ENCODE measurements at regions of chr20 and their contacts with region 1.

Region 1: DNA sequence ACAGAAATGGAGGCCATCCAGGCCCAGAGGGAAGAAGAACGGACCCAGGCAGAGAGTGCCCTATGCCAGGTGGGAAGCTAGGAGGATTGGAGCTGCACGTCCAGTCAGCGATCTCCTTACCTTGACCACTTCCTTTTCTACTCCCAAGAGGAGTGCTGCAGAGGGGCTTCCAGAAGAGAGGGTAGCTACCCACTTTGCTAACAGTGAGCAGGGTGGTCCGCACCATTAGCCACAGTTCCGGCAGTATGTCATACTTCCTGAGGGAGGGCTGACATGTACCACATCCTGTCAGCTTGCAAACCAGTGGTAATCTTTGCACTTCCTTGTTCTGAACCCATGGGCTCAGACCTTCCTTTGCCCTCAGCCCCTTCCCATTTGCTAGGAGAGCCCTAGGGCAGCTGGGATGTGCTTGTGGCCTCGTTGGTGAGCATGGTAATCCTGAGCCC is 35.4 kb downstream of the CEP250 start:
- DNase-seq: peak; percentile 24 to 84 (median 64)
- ATAC-seq: peak; percentile 99 to 100
- H3K4me3 Mint-ChIP-seq: peak overlapping the region; percentile 96 to 100 (median 99)
- H3K27ac Mint-ChIP-seq: peak overlapping the region; percentile 97 to 100 (median 99)
- H3K4me1 Mint-ChIP-seq: peaks cover 31 to 81% (median 75%) of the 10 kb centered on the region in 4 donors
- H3K27me3 Mint-ChIP-seq: no peaks in the 10 kb centered on the region

Region 2: GRCh38 chr20:35432430-35432735 is 58.4 kb before region 1 on chr20:
- POLR2A ChIA-PET with region 1: no interaction called
- DNase-seq: no peak
- ATAC-seq: no peak
- H3K4me3 Mint-ChIP-seq: no peak overlapping the region
- H3K27ac Mint-ChIP-seq: peak overlapping the region in 3 of 10 donors; percentile 9 to 63 (median 30)
- H3K4me1 Mint-ChIP-seq: peaks cover 0 to 3% (median 0%) of the 10 kb centered on the region in 4 donors
- H3K27me3 Mint-ChIP-seq: no peaks in the 10 kb centered on the region

Region 3: DNA sequence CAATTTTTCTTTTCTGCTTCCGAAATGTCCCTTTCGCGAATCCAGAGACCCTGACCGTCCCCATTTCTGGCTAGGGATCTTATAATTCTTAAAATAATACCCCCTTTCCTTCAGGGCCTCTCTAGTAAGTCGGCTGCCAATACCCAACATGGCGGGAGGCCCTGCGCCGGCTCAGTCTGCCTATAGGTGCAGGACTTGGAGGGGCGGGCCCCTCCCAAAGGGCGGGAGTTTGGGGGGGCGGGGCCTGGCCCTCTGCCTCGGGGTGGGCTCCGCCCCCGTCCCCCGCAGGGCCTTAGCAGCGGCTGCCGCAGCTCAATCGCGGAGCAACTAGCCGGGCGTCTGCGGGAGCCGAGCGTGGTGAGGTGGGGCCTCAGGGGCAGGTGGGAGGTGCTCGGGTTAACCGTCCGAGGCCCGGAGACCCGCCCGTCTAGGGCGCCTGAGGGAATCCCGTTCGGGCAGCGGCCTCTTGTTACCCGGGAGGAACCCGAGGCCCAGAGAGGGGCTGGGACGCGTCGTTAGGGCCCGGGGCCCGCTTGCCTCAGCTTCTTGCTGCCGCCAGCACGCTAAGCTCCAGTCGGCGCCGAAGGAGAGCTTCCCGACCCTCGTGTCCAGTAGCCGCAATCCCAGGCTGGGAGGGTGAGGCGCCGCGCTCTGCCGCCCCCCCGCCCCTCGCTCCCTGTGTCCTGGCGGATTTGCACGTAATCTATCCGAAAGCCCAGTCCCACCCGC is 35.7 kb before region 1 on chr20 and contains the start of gene CEP250:
- POLR2A ChIA-PET with region 1: interaction called, 18 read pairs
- DNase-seq: peak; percentile 91 to 98 (median 96)
- ATAC-seq: peak; percentile 93 to 94
- H3K4me3 Mint-ChIP-seq: peak within 1 kb of the TSS; percentile 88 to 98 (median 95)
- H3K27ac Mint-ChIP-seq: peak within 1 kb of the TSS; percentile 87 to 100 (median 98)
- H3K4me1 Mint-ChIP-seq: peaks cover 0 to 33% (median 21%) of the 10 kb centered on the region in 4 donors
- H3K27me3 Mint-ChIP-seq: no peaks in the 10 kb centered on the region
- polyA plus RNA-seq, gene CEP250: 4.5 to 17.5 (median 6.0) TPM

Region 4: DNA sequence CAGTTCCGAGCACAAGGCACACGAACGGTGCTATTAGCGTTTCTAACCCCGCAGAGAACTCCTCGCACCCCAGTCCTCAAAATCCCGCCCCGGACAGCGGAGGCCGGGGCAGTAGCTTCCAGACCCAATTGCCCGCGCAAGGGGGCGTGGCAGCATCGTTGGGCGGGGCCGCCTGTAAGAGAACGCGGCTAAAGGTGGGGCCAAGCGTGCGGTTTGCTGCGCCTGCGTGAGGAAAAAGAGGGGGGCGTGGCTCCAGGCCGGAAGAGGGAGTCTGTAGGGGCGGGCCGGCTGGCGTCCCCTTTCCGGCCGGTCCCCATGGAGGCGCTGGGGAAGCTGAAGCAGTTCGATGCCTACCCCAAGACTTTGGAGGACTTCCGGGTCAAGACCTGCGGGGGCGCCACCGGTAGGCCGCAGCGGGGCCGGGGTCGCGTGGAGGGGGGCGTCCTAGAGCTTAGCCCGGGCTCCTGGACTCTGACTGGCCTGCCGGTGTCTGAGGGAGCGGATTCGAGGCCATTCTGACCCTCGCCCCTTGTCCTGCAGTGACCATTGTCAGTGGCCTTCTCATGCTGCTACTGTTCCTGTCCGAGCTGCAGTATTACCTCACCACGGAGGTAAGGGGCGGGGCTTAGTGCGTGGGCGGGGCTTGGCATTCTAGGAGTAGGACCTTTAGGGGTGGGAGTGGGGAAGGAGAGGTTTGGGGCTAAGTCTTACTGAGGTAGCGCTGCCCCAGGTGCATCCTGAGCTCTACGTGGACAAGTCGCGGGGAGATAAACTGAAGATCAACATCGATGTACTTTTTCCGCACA is 51.2 kb after region 1 on chr20 and contains the start of gene ERGIC3:
- POLR2A ChIA-PET with region 1: interaction called, 22 read pairs
- DNase-seq: peak; percentile 92 to 98 (median 96)
- ATAC-seq: peak; percentile 96
- H3K4me3 Mint-ChIP-seq: peak within 1 kb of the TSS; percentile 82 to 97 (median 92)
- H3K27ac Mint-ChIP-seq: peak within 1 kb of the TSS; percentile 70 to 96 (median 91)
- H3K4me1 Mint-ChIP-seq: peaks cover 10 to 28% (median 24%) of the 10 kb centered on the region in 4 donors
- H3K27me3 Mint-ChIP-seq: peaks cover 0 to 2% (median 0%) of the 10 kb centered on the region in 5 donors
- polyA plus RNA-seq, gene ERGIC3: 129 to 150 (median 149) TPM

Measured in naive thymus-derived CD8-positive, alpha-beta T cell (primary cell).